AG04449 (cell line): ENCODE measurements at regions of chr12 and their contacts with region 1.

Region 1: DNA sequence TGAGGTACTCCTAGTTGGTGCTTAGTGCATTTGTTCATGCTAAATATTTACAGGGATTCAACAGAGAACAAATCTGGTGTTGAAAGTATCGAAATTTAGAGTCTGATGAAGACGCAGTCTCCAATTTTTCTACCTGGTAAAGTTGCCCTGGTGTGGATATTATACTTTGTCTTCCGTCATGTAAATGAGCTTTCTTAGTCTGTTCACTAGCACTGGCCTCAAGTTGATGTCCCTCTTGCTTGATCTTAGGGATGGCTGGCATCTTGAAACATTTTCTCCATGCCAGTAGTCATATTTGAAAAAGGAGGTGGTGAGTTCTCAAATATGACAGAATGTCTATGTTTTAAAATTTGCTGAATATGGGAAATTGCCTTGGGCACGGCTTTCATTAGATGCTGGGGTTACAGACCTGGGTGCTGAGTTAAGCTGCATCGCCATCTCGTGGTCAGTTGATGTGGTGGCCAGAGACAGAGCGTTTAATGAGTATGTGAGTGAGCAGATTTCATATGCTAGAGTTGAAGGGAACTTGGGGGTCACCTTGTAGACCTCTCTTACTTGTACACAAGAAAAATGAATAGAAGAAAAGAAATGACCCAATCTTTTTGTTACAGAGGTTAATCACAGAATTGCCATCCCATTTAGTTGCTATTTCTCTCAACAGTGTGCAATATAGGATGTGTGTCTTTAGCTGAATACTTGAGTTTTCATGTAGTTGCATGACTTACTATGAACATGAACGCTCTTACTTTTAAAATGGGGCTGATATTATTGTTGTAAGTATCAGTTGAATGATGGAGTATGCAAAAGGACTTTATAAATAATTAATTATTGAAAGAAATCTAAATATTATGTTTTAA is 172.8 kb upstream of the DCN start:
- DNase-seq: no peak
- H3K4me3 ChIP-seq: no peak overlapping the region
- CTCF ChIP-seq: peak; percentile 86

Region 2: GRCh38 chr12:90953956-90954421 is 401.4 kb before region 1 on chr12:
- CTCF ChIA-PET with region 1: interaction called, 89 read pairs
- POLR2A ChIA-PET with region 1: no interaction called
- DNase-seq: no peak
- H3K4me3 ChIP-seq: no peak overlapping the region
- CTCF ChIP-seq: no peak

Region 3: DNA sequence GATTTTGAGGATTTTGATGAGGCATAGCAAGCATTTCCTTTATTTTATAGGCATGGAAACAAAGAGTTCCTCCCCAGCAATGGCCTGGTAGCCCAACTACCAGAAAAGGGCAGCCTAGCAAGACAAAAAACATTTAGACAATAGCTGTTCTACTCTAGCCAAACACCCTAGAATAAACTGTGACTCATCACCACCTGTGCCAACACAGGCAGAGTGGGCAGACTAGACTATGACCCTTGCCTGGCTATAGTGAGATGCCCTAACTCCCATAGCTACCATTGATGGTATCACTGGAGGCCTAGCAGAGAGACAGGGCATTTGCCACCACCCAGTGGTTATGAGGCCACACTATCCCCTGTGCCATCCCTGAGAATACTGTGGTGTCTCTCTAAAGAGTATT is 384.9 kb before region 1 on chr12:
- CTCF ChIA-PET with region 1: interaction called, 14 read pairs
- POLR2A ChIA-PET with region 1: no interaction called
- DNase-seq: no peak
- H3K4me3 ChIP-seq: no peak overlapping the region
- CTCF ChIP-seq: no peak

Region 4: DNA sequence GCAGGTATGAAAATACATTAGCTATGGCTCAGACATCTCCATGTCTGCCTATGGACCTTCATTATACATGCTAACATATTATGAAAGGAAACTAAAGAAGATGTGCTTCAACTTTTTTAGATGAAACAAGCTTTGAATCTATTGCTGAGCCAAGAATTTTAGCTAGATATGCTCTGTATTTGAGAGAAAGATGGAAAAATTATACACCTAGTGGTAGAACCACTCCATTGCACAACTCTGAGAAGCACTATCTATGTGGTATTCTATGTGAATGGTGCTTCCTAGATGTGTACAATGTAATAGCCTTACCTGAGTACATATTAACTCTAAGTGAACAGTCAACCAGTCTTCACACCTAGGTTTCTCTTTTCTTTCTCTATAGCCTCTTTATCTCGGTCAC is 367.9 kb before region 1 on chr12:
- CTCF ChIA-PET with region 1: interaction called, 10 read pairs
- POLR2A ChIA-PET with region 1: no interaction called
- DNase-seq: no peak
- H3K4me3 ChIP-seq: no peak overlapping the region
- CTCF ChIP-seq: no peak

Region 5: GRCh38 chr12:91178139-91178561 is 177.2 kb before region 1 on chr12:
- CTCF ChIA-PET with region 1: interaction called, 53 read pairs
- POLR2A ChIA-PET with region 1: no interaction called
- DNase-seq: no peak
- H3K4me3 ChIP-seq: peak overlapping the region; percentile 40
- CTCF ChIP-seq: peak; percentile 41

Region 6: DNA sequence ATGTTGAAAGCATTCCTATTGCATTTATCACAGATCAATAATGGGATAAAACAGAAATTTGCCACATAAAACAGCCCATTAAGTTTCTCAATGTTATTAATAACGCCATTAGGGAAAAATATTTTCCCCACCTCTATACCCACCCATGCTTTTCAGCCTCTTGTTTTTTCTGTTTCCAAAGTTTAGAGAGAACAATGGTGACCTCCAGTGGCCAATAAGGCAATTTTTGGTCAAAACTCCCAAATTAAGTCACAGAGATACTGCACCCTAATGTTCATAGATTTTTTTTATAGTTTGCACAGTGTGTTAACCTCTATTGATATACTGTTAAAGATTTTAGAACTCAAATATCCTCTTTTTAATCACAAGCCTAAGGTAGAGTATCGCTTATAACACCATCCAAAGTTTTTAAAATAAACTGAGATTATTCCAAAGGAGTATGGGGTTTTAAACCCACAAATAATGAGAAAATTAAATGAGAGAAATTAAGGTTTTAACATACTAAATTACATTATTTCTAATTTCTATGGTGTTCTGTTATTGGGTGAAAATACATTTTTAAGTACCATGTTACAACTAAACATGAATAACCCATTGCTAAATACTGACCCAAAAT is 12.0 kb after region 1 on chr12:
- CTCF ChIA-PET with region 1: interaction called, 29 read pairs
- POLR2A ChIA-PET with region 1: no interaction called
- DNase-seq: no peak
- H3K4me3 ChIP-seq: no peak overlapping the region
- CTCF ChIP-seq: peak; percentile 31

Region 7: DNA sequence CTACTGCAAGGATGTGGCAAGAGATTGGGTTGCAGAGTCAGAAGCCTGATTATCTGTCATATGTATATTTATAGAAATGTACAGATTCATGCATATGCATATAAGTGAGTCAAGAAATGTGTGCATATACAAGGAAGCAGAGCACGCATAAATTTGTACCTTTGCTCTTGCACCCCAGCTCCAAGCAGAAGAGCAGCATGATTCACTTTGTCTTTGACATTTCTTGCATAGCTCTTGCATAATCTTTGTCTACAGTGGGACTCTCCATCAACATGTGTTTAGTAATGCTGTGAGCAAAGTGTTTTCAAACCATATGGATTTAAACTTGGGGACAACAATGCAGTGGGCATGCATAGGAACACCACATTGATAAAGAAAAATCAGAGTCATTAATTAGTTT is 157.9 kb after region 1 on chr12:
- CTCF ChIA-PET with region 1: no interaction called
- POLR2A ChIA-PET with region 1: no interaction called
- DNase-seq: no peak
- H3K4me3 ChIP-seq: no peak overlapping the region
- CTCF ChIP-seq: no peak